GM10248 (cell line): ENCODE measurements at regions of chr20 and their contacts with region 1.

Region 1: DNA sequence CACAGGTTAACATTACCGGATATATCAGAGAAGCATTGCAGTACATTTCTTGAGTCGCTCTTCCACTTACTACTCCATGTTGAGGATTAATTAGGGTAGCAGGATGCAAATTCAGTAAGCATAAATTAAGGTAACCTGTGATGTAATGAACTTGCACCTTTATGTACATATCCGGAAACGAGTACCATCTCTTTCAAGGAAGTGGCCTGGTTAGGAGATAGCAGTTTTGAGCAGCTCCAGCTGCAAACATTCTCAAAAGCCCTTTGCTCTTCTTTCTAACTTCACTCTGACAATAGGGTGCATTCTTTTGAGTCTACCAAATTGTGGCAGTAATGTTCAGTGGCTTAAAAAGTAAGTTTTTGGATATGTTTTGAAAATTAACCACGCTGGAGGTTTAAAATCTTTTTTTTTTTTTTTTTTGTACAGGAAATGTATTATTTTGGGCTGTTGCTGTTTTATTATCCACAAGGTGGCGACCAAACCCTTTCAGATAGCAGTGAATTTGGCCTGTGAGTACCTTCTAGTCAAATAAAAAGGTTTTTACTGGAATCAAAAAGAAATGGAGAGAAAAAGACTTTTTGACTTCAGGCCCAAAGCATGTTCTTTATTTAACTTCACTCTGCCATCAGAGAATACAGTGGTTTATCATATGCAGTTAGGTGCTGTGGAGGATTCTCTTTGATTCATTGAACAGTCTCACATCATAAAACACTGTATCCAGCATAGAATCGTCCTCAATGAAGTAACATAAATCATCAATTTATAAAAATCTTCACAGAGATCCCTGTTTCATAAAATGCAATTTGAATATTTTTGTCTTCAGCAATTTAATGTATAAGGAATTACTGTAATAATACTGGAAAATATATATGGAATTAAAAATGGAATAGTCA is 8.9 kb downstream of the FAM217B start:
- DNase-seq: no peak
- CTCF ChIP-seq: peak; percentile 46

Region 2: GRCh38 chr20:59933849-59934596 is 15.1 kb before region 1 on chr20:
- CTCF ChIA-PET with region 1: interaction called, 94 read pairs
- POLR2A ChIA-PET with region 1: no interaction called
- DNase-seq: peak; percentile 88
- CTCF ChIP-seq: peak; percentile 96

Region 3: DNA sequence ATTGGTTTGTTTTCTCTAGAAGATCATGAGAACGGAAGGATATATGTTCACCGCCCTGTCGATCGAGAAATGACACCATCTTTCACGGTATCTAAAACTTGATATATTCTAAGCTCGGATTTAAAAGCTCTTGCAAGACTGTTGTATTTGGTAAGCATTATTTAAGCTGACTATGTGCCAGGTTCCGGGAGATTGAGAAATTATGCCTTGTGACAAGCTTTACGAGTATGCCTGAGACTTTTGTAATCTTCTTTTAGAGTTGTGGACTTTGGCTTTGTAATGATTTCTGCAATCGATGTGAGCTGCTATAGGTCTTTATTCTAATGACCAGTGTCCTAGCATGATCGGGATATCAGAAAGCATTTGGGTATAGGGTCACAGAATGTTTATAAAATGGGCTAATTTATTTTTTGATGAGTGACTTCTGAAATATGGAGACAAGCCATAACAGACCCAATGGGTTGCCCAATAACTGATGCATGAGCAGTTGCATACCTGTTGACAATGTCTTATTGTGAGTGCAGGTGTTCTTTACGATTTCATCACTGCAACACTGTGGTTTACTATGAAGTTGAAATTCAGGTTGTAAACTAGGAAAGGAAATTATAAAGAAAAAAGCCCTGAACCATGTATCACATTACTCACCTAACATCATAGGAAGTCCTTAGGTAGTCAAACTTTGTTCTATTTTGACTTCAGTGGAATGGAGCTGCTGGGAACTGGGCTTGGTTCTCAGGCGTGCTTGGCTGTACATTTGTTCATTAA is 23.1 kb after region 1 on chr20:
- CTCF ChIA-PET with region 1: no interaction called
- POLR2A ChIA-PET with region 1: no interaction called
- DNase-seq: no peak
- CTCF ChIP-seq: no peak